Heart left ventricle (tissue), 16 donors: ENCODE measurements at regions of chr16 and their contacts with region 1.

Region 1: DNA sequence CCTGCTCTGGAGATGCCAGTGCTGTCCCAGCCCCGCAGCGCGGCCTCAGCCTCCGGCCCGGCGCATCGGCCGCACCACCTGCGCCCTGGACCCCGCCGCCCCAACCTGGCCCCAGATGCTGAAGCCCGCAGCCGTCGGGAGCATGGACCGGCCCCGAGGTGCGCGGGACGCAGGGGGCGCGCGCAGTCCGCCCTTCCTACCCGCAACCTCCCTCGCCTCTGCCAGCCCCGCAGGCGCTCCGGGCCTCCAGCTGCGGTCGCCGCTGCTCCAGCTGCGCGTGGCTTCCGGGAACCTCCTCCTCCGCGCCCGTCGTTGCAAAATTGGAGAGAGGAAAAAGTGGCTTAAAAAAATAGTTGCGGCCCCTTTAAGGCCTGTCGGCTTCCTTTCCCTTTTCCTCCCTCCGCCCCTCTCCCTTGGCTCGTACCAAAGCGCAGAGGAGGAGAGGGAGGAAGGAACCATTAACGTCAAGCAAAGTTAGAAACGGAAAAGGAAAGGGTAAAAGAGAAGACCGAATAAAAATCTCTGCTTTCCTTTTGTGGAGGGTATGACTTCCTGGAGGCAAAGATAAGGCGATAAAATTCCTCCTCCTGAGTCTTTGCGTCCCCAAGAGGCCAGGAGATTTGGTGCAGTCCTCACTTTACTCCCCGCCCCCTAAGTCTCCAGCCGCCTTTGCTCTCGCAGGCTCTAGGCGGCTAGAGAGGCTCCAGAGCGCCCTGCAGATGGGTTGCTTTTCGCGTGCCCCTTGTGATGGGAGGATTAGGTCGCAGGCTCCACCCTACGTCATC is at the start of gene CDIPT:
- DNase-seq: peak; percentile 94 to 97 (median 94)
- ATAC-seq: peak; percentile 98 to 99 (median 98)
- H3K4me3 ChIP-seq: peak within 1 kb of the TSS; percentile 79 to 100 (median 95)
- H3K27ac ChIP-seq: peak within 1 kb of the TSS; percentile 84 to 97 (median 94)
- H3K4me1 ChIP-seq: peaks cover 0 to 27% (median 16%) of the 10 kb centered on the region in 12 donors
- H3K27me3 ChIP-seq: no peaks in the 10 kb centered on the region
- CTCF ChIP-seq: peak; percentile 34 to 76 (median 46)
- POLR2A ChIP-seq: peak in 1 of 2 donors; percentile 48
- total RNA-seq, gene CDIPT: 57.5 to 143 (median 76.3) TPM

Region 2: GRCh38 chr16:29805378-29806098 is 57.5 kb before region 1 on chr16:
- intact Hi-C with region 1: no loop called
- DNase-seq: peak; percentile 98 to 99 (median 98)
- ATAC-seq: peak; percentile 84 to 89 (median 88)
- H3K4me3 ChIP-seq: peak overlapping the region; percentile 65 to 98 (median 83)
- H3K27ac ChIP-seq: peak overlapping the region; percentile 95 to 100 (median 99)
- H3K4me1 ChIP-seq: peaks cover 3 to 47% (median 42%) of the 10 kb centered on the region in 12 donors
- H3K27me3 ChIP-seq: no peaks in the 10 kb centered on the region
- CTCF ChIP-seq: no peak
- POLR2A ChIP-seq: peak in 1 of 2 donors; percentile 81

Region 3: DNA sequence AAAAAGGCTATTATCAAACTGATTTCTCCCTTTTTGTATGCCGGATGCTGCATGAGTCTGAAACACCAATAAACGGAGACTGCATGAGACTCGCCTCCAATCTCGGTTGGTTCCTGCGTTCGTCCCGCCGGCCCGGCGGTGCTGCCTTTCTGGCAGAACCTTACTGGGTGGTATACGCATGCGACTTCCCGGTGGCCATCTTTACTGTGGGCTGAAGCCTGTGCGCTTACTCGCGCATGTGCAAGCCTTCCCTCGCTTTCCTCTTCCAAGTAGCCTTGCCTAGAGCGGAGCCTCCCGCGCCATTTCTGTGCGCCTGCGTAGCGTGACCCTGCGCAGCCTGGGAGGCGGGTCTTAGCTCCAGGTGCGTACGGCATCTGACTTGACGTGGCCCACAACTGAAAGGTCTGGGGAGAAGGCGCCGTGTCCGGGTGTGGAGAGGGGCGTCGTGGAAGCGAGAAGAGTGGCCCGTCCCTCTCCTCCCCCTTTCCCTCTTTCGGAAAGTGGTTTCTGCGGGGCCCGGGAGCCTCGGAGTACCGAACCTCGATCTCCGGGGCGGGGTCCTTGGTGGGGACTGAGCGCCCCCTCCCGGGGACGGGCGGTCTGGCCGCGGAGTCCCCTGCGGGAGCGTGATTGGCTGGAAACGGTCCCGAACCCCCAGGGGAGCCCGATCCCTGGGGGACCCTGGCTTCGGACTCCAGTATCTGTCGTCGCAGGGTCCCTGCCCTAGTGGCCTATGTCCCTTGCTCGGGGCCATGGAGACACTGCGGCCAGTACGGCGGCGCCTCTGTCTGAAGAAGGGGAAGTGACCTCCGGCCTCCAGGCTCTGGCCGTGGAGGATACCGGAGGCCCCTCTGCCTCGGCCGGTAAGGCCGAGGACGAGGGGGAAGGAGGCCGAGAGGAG is 47.0 kb before region 1 on chr16 and contains the start of gene PAGR1:
- intact Hi-C with region 1: loop called in 4 of 10 experiments (anchors 5 kb)
- DNase-seq: peak; percentile 97 to 99 (median 99)
- ATAC-seq: peak; percentile 80 to 89 (median 86)
- H3K4me3 ChIP-seq: peak within 1 kb of the TSS; percentile 45 to 91 (median 74)
- H3K27ac ChIP-seq: peak within 1 kb of the TSS; percentile 84 to 97 (median 93)
- H3K4me1 ChIP-seq: peaks cover 3 to 71% (median 51%) of the 10 kb centered on the region in 12 donors
- H3K27me3 ChIP-seq: peaks cover 0 to 4% (median 0%) of the 10 kb centered on the region in 9 donors
- CTCF ChIP-seq: peak; percentile 82 to 98 (median 91)
- POLR2A ChIP-seq: peak in 1 of 2 donors; percentile 60
- total RNA-seq, gene PAGR1: 10.8 to 23.9 (median 12.6) TPM

Region 4: DNA sequence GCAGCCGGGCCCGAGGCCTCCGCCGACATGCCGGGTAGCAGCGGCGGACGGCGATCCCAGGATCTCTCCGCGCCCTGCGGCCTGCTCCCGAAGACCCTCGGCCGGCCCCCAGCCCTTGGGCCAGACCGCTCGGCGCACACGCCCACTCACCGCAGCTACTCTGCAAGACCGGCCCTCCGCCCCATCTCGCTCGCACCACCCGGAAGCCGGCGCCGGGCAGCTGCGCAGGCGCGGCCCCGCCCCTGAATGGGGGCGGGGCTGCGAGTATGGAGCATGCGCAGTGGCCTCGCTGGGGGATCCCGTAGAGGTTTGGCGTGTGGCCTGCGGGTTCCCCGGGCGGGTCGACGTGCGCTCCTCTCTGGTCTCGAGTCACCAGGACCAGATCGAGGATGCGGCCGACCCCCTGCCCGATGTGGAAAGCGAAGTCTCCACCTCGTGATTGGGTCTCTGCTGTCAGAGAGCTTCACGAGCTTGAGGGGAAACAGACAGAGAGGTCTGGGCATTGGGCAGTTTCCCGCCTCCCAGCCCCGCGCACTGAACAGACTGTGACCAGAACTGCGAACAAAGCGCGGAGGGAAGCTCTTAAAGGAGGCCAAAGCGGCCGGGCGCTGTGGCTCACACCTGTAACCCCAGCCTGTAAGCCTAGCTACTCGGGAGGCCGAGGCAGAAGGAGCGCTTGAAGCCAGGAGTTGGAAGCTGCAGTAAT is 63.1 kb after region 1 on chr16 and contains the start of gene KCTD13:
- intact Hi-C with region 1: no loop called
- DNase-seq: peak; percentile 85 to 95 (median 89)
- ATAC-seq: peak; percentile 89 to 99 (median 99)
- H3K4me3 ChIP-seq: peak within 1 kb of the TSS; percentile 72 to 100 (median 92)
- H3K27ac ChIP-seq: peak within 1 kb of the TSS; percentile 72 to 96 (median 88)
- H3K4me1 ChIP-seq: peaks cover 4 to 27% (median 18%) of the 10 kb centered on the region in 12 donors
- H3K27me3 ChIP-seq: no peaks in the 10 kb centered on the region
- CTCF ChIP-seq: no peak
- POLR2A ChIP-seq: peak in 1 of 2 donors; percentile 93
- total RNA-seq, gene KCTD13: 3.6 to 9.1 (median 7.2) TPM

Region 5: DNA sequence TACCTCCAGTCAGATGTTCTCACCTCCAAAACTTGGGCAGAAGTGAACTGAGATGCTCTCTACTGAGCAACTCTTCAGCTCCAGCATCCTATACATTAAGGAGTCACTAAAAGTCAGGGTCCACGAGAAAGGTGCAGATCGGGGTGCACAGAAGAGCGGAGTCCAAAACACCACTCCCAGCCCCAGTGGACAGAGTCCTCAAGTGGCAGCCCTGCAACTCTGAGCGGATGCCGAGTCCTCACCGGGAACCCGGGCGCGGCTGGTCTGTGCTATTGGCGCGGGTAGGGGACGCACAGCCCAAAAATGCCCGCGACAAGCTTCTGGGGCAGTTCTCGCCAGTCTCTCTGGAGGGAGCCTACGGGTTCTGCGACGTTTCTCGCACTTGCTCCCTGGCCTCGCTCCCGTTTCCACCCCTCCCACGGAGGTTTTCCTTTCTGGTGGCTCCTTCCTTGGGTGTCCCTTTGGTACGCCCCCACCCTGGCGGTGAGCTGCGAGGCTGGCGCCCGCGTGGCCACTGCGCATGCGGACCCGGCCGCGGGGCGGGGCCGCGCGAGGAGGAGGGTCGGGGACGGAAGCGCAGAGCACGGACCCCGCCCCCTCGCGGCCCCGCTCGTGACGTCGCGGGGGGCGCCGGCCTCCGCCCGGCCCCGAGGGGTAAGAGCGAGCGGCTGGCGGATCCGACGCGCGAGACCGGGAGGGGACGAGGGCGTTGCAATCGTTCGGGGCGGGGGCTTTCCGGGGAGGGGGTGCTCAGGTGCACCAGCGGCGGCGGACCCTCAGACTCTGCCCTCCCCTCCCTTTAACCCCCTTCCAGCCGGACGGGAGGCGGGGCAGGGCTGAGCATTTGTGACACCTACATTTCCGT is 98.6 kb after region 1 on chr16 and contains the start of gene TMEM219:
- intact Hi-C with region 1: loop called in 1 of 10 experiments (anchors 2 kb)
- DNase-seq: peak; percentile 93 to 97 (median 94)
- ATAC-seq: peak; percentile 89 to 99 (median 97)
- H3K4me3 ChIP-seq: peak within 1 kb of the TSS; percentile 59 to 98 (median 76)
- H3K27ac ChIP-seq: peak within 1 kb of the TSS; percentile 76 to 98 (median 96)
- H3K4me1 ChIP-seq: peaks cover 0 to 35% (median 18%) of the 10 kb centered on the region in 12 donors
- H3K27me3 ChIP-seq: no peaks in the 10 kb centered on the region
- CTCF ChIP-seq: peak; percentile 23 to 67 (median 48)
- POLR2A ChIP-seq: peak in 1 of 2 donors; percentile 85
- total RNA-seq, gene TMEM219: 58.9 to 121 (median 69.8) TPM

Region 6: DNA sequence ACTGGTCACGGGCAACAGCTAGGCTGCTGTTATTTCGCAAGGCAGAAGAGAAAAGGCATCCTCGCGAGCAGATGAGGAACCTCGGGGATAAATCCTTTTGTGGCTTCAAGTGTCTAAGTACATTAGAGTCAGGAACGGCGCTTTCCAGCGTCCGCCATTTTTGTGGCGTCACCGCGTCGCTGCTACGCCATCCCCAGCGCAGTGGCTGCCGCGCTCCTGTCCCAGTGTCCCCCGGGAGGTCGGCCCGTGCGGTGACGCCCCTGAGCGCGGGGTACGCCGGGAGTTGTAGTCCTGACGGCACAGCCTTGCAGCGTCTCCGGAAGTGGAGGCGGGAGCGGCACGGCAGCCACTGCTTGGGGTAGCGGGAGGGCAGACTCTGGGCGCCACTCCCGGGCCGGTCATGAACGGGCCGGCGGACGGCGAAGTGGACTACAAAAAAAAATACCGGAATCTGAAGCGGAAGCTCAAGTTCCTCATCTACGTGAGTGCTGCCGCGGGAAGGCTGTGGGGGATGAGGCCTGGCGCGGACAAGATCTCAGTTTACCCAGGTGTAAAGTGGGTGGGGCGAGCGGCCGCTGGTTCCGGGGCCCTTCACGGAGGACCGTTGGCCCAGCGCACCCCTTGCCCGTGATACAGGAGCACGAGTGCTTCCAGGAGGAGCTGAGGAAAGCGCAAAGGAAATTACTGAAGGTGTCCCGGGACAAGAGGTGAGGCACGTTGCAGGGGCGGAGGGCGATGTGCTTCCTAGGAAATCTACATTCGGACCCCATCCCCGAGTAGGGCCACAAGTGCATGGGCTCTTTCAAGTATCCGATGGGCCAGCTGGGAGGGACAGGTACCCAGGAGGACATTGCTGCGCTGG is 133.1 kb after region 1 on chr16 and contains the start of gene INO80E:
- intact Hi-C with region 1: loop called in 5 of 10 experiments (anchors 5 to 10 kb)
- DNase-seq: peak; percentile 99 to 100 (median 99)
- ATAC-seq: peak; percentile 98 to 99 (median 98)
- H3K4me3 ChIP-seq: peak within 1 kb of the TSS; percentile 53 to 95 (median 80)
- H3K27ac ChIP-seq: peak within 1 kb of the TSS; percentile 88 to 100 (median 96)
- H3K4me1 ChIP-seq: peaks cover 0 to 31% (median 18%) of the 10 kb centered on the region in 12 donors
- H3K27me3 ChIP-seq: no peaks in the 10 kb centered on the region
- CTCF ChIP-seq: no peak
- POLR2A ChIP-seq: peak in 1 of 2 donors; percentile 58
- total RNA-seq, gene INO80E: 27.6 to 65.4 (median 32.6) TPM

Region 7: GRCh38 chr16:30005341-30006094 is 142.4 kb after region 1 on chr16:
- intact Hi-C with region 1: loop called in 4 of 10 experiments (anchors 5 to 10 kb)
- DNase-seq: peak in 2 of 5 donors; percentile 22 to 64
- ATAC-seq: peak in 3 of 4 donors; percentile 29 to 66 (median 62)
- H3K4me3 ChIP-seq: no peak overlapping the region
- H3K27ac ChIP-seq: no peak overlapping the region
- H3K4me1 ChIP-seq: peaks cover 0 to 14% (median 3%) of the 10 kb centered on the region in 12 donors
- H3K27me3 ChIP-seq: peaks cover 7 to 25% (median 18%) of the 10 kb centered on the region in 9 donors
- CTCF ChIP-seq: peak; percentile 73 to 89 (median 84)
- POLR2A ChIP-seq: peak in 1 of 2 donors; percentile 9

Region 8: GRCh38 chr16:30024451-30024850 is 161.4 kb after region 1 on chr16:
- intact Hi-C with region 1: loop called in 3 of 10 experiments (anchors 5 to 10 kb)
- DNase-seq: no peak
- ATAC-seq: no peak
- H3K4me3 ChIP-seq: no peak overlapping the region
- H3K27ac ChIP-seq: no peak overlapping the region
- H3K4me1 ChIP-seq: peaks cover 0 to 13% (median 4%) of the 10 kb centered on the region in 12 donors
- H3K27me3 ChIP-seq: peaks cover 0 to 38% (median 14%) of the 10 kb centered on the region in 9 donors
- CTCF ChIP-seq: no peak
- POLR2A ChIP-seq: no peak

Region 9: GRCh38 chr16:30032083-30032819 is 169.2 kb after region 1 on chr16:
- intact Hi-C with region 1: loop called in 1 of 10 experiments (anchors 10 kb)
- DNase-seq: no peak
- ATAC-seq: peak in 1 of 4 donors; percentile 29
- H3K4me3 ChIP-seq: no peak overlapping the region
- H3K27ac ChIP-seq: no peak overlapping the region
- H3K4me1 ChIP-seq: peaks cover 0 to 11% (median 0%) of the 10 kb centered on the region in 12 donors
- H3K27me3 ChIP-seq: peaks cover 25 to 86% (median 67%) of the 10 kb centered on the region in 9 donors
- CTCF ChIP-seq: peak; percentile 38 to 63 (median 54)
- POLR2A ChIP-seq: no peak